Activated CD4-positive, alpha-beta memory T cell treated with anti-CD3 and anti-CD28 coated beads for 36 hours (primary cell): ENCODE measurements at regions of chr10 and their contacts with region 1.

Region 1: GRCh38 chr10:69318106-69318866 is 40.0 kb downstream of the HK1 start:
- DNase-seq: peak; percentile 95
- H3K4me3 Mint-ChIP-seq: peak overlapping the region; percentile 99
- H3K27ac Mint-ChIP-seq: peak overlapping the region; percentile 97
- H3K4me1 Mint-ChIP-seq: peaks cover 50% of the 10 kb centered on the region
- H3K27me3 Mint-ChIP-seq: no peaks in the 10 kb centered on the region

Region 2: GRCh38 chr10:69107699-69108098 is 210.6 kb before region 1 on chr10:
- CTCF ChIA-PET with region 1: no interaction called
- POLR2A ChIA-PET with region 1: no interaction called
- intact Hi-C with region 1: no loop called
- DNase-seq: no peak
- H3K4me3 Mint-ChIP-seq: no peak overlapping the region
- H3K27ac Mint-ChIP-seq: no peak overlapping the region
- H3K4me1 Mint-ChIP-seq: peaks cover 7% of the 10 kb centered on the region
- H3K27me3 Mint-ChIP-seq: no peaks in the 10 kb centered on the region

Region 3: DNA sequence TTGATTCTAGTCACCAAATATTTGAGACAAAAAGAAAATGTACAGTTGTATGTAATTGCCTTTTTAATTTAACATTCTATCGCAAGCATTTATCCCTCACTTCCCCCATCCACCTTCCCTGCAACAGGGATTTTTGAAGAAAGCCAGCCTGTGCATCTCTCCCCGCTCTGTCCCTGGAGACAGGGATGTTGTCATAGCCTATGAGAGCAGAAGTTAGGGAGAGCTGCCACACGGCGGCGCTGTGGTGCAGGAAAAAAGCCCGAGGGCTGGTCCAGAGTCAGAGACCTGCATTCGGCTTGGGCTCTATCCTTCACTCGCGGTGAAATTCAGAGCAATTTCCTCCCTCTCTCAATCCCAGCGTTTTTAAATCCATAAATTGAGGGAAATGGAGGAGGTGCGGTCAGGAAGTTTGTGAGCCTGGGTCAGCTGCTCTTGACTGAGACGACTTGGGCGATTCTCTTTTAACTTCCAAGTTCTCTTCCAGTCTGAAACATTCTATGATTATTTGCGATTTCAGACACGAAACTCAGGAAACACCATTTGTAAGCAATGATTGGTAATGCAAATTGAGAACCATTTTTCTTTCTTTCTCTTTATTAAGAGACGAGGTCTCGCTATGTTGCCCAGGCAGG is 80.6 kb before region 1 on chr10:
- CTCF ChIA-PET with region 1: interaction called, 5 read pairs
- POLR2A ChIA-PET with region 1: interaction called, 3 read pairs
- intact Hi-C with region 1: loop called (anchors 2 kb)
- DNase-seq: peak; percentile 93
- H3K4me3 Mint-ChIP-seq: no peak overlapping the region
- H3K27ac Mint-ChIP-seq: no peak overlapping the region
- H3K4me1 Mint-ChIP-seq: peaks cover 23% of the 10 kb centered on the region
- H3K27me3 Mint-ChIP-seq: no peaks in the 10 kb centered on the region

Region 4: DNA sequence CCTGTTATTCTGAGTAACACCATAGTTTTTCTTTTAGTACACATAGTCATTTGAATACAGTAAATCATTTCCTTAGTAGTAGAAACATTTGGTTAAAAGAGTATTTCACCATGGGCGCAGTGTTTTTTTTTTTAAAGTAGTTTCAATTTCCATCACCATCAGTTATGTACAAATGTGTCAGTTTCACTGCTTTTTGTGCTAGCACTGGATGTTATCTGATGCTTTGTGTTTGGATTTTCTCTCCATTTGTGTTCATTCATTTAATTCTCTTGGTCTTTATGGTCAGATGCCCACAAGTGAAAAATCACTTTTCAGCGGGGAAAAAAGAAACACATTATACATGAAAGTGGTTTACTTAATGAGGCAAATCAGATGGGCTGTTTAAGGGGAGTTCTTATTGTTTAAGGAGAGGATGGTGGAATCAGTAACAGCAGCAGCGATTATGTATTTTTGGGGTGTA is 56.0 kb before region 1 on chr10:
- CTCF ChIA-PET with region 1: no interaction called
- POLR2A ChIA-PET with region 1: interaction called, 4 read pairs
- intact Hi-C with region 1: loop called (anchors 1 kb)
- DNase-seq: no peak
- H3K4me3 Mint-ChIP-seq: no peak overlapping the region
- H3K27ac Mint-ChIP-seq: peak overlapping the region; percentile 55
- H3K4me1 Mint-ChIP-seq: peaks cover 18% of the 10 kb centered on the region
- H3K27me3 Mint-ChIP-seq: no peaks in the 10 kb centered on the region

Region 5: DNA sequence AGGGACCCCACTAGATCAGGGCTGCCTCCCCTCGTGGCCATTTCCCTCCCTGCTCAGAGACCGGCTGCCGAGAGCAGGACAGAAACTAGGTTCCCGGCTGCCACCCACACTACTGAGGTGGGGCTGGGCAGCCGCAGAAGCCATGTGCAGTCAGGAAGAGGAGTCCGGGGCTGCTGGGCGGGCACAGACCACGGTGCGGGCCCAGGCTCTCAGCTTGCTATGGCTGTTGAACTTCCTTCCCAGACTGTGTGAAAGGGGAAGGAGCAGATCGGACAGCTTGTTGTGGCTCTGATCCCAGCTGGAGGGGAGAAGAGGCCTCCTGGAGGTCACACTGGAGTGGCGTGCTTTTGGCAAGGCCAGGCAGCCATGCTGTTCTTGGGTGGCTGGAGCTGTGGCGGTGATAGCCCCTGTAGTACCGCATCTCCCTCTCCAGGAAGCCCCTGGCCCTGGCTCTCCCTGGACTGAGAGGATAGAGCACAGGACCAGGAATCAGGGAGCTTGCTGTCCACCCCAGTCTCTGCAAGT is 16.8 kb after region 1 on chr10:
- CTCF ChIA-PET with region 1: interaction called, 4 read pairs
- POLR2A ChIA-PET with region 1: interaction called, 10 read pairs
- intact Hi-C with region 1: no loop called
- DNase-seq: peak; percentile 56
- H3K4me3 Mint-ChIP-seq: peak overlapping the region; percentile 54
- H3K27ac Mint-ChIP-seq: peak overlapping the region; percentile 72
- H3K4me1 Mint-ChIP-seq: peaks cover 62% of the 10 kb centered on the region
- H3K27me3 Mint-ChIP-seq: no peaks in the 10 kb centered on the region

Region 6: DNA sequence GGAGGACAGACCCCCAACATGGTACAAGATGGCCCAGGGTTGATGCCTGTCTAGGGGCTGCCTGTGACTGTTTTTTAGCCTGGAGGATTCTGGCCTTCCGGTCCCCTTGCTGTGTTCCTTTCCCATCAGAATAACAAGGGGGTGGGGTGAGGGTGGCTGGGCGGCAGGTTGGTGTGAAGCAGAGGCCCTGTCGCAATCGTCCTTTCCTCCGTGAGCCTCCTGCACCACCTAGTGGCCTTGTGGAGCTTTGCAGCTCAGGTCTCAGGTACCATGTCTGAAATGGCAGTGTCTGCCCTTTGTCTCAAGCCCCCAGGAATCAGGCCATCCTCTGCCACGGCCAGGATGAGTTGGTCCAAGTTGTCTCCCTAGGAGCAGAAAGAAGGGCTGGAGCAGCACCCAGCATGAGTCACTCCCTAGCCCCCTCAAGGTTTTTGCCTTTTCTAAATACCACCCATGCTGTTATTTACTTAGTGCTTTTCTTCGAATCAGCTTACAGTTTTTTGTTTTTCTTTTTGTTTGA is 74.3 kb after region 1 on chr10:
- CTCF ChIA-PET with region 1: interaction called, 4 read pairs
- POLR2A ChIA-PET with region 1: interaction called, 3 read pairs
- intact Hi-C with region 1: loop called (anchors 5 kb)
- DNase-seq: peak; percentile 89
- H3K4me3 Mint-ChIP-seq: no peak overlapping the region
- H3K27ac Mint-ChIP-seq: peak overlapping the region; percentile 67
- H3K4me1 Mint-ChIP-seq: peaks cover 11% of the 10 kb centered on the region
- H3K27me3 Mint-ChIP-seq: no peaks in the 10 kb centered on the region

Region 7: DNA sequence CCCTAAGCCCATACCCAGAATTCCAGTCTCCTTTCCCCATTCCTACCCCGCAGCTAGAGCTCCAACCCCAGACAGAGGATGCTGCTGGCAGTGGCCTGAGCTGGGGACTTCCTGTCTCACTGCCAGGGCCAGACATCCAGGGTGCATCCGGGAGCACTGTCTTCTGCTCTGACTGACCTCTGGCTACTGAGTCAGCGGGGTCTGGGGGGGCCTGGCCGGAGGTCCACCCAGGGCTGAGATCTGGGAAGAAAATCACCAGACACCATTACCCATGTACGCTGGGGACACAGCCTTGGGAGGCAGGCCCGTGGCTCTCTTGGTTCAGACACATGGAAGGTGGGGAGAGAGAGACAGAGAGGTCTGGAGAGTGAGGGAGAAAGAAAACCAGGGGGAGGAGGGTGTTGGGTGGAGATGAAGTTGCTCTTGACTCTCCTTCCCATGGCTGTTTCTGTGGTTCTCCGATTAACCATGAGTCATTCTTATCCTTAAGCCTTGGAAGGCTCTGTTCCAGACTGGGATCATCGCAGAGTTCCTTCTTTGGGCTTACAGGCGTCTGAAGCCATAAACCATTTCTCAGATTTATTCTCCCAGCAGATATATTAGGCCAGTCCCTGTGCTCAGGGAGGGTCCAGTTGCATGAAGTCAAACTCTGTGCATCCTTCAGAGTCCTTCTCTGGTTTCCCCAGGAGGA is 156.6 kb after region 1 on chr10:
- CTCF ChIA-PET with region 1: no interaction called
- POLR2A ChIA-PET with region 1: no interaction called
- intact Hi-C with region 1: no loop called
- DNase-seq: no peak
- H3K4me3 Mint-ChIP-seq: no peak overlapping the region
- H3K27ac Mint-ChIP-seq: no peak overlapping the region
- H3K4me1 Mint-ChIP-seq: no peaks in the 10 kb centered on the region
- H3K27me3 Mint-ChIP-seq: no peaks in the 10 kb centered on the region